ENCODE measurements at regions of chr3 and their contacts with region 1.

Region 1: GRCh38 chr3:62622553-62623193 is 249.3 kb upstream of the FEZF2 start:
- DNase-seq: peak; percentile 48
- ATAC-seq: peak; percentile 30; the same call in 2 of the 3 replicates
- H3K4me3 ChIP-seq: no peak overlapping the region
- H3K27ac ChIP-seq: no peak overlapping the region
- H3K4me1 ChIP-seq: no peaks in the 10 kb centered on the region
- H3K27me3 ChIP-seq: no peaks in the 10 kb centered on the region
- CTCF ChIP-seq: peak; percentile 64
- EP300 ChIP-seq: no peak
- POLR2A ChIP-seq: no peak
- RAD21 ChIP-seq: peak; percentile 22; the same call in 1 of the 2 replicates

Region 2: DNA sequence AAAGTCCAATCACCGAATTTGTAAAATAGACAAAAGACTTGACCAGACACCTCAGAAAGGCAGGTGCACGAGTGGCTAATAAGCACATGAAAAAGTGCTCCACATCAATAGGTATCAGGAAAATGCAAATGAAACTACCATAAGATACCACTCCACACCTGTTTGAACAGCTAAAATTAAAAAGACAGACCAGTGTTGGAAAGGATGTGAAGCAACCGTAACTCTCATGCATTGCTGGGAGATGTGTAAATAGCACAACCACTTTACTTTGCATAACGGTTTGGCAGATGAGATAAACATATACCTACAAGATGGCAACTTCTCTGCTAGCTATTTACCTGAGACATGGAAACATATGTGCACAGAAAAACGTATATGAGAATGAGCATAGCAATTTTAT is 195.7 kb after region 1 on chr3:
- CTCF ChIA-PET with region 1: no interaction called
- POLR2A ChIA-PET with region 1: no interaction called
- in situ Hi-C with region 1: no loop called
- intact Hi-C with region 1: no loop called
- DNase-seq: no peak
- ATAC-seq: no peak
- H3K4me3 ChIP-seq: no peak overlapping the region
- H3K27ac ChIP-seq: no peak overlapping the region
- H3K4me1 ChIP-seq: no peaks in the 10 kb centered on the region
- H3K27me3 ChIP-seq: no peaks in the 10 kb centered on the region; a peak in 1 of 5 replicates
- CTCF ChIP-seq: no peak
- EP300 ChIP-seq: no peak
- POLR2A ChIP-seq: no peak
- RAD21 ChIP-seq: no peak

Region 3: GRCh38 chr3:62863653-62864052 is 241.0 kb after region 1 on chr3:
- CTCF ChIA-PET with region 1: no interaction called
- POLR2A ChIA-PET with region 1: no interaction called
- in situ Hi-C with region 1: no loop called
- intact Hi-C with region 1: no loop called
- DNase-seq: no peak
- ATAC-seq: no peak
- H3K4me3 ChIP-seq: no peak overlapping the region
- H3K27ac ChIP-seq: no peak overlapping the region
- H3K4me1 ChIP-seq: no peaks in the 10 kb centered on the region
- H3K27me3 ChIP-seq: no peaks in the 10 kb centered on the region
- CTCF ChIP-seq: no peak
- EP300 ChIP-seq: no peak
- POLR2A ChIP-seq: no peak
- RAD21 ChIP-seq: no peak

Region 4: GRCh38 chr3:63015601-63016309 is 393.1 kb after region 1 on chr3:
- CTCF ChIA-PET with region 1: no interaction called
- POLR2A ChIA-PET with region 1: no interaction called
- in situ Hi-C with region 1: no loop called
- intact Hi-C with region 1: no loop called
- DNase-seq: peak; percentile 3
- ATAC-seq: peak; percentile 83
- H3K4me3 ChIP-seq: no peak overlapping the region
- H3K27ac ChIP-seq: no peak overlapping the region
- H3K4me1 ChIP-seq: no peaks in the 10 kb centered on the region
- H3K27me3 ChIP-seq: no peaks in the 10 kb centered on the region
- CTCF ChIP-seq: no peak
- EP300 ChIP-seq: no peak
- POLR2A ChIP-seq: no peak
- RAD21 ChIP-seq: no peak

Region 5: DNA sequence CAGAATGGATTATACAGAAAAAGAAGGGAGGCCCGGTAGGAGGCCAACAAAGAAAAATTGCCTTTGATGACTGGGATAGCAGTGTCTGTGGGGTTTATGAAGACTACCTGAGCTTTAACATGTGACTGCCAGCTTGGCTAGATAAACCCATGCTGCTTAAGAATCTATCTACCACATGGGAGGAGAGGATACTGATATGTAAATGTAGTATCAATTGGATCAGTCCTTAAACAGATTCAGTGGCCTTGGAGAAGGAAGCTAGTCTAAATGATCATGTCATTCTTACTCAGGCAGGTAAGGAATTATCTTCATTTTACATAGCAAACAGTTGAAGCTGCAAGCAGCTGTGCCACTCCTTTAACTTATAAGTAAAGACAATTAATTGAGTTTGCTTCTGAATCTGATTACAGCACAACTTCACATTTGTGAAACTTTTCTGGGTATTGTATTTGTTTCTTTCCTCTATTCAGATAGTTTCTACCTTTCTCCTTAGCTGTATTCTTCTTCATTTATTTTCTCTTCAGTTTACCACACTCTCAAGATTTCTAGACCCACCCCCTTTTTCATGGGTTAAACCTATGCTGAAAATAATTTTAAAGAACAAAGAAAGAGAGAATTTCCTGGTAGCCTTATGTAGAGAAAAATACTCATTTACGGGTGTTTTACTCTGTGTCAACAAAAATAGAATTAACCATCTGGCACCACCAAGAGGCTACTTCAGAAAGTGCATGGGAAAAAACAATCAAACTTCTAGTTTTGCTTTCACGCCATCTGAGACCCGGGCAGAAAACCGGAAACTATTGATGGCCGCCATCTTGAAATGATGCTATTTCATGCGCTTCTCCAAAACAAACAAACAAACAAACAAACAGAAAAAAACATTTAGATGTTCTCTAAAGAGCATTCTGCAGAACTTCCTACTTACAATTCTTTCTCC is 605.7 kb after region 1 on chr3:
- CTCF ChIA-PET with region 1: interaction called, 9 read pairs
- POLR2A ChIA-PET with region 1: no interaction called
- in situ Hi-C with region 1: no loop called
- intact Hi-C with region 1: loop called (anchors 1 kb)
- DNase-seq: peak; percentile 16
- ATAC-seq: peak; percentile 66
- H3K4me3 ChIP-seq: no peak overlapping the region
- H3K27ac ChIP-seq: no peak overlapping the region
- H3K4me1 ChIP-seq: no peaks in the 10 kb centered on the region
- H3K27me3 ChIP-seq: no peaks in the 10 kb centered on the region; a peak in 1 of 5 replicates
- CTCF ChIP-seq: peak; percentile 56
- EP300 ChIP-seq: no peak
- POLR2A ChIP-seq: no peak
- RAD21 ChIP-seq: no peak

Region 6: DNA sequence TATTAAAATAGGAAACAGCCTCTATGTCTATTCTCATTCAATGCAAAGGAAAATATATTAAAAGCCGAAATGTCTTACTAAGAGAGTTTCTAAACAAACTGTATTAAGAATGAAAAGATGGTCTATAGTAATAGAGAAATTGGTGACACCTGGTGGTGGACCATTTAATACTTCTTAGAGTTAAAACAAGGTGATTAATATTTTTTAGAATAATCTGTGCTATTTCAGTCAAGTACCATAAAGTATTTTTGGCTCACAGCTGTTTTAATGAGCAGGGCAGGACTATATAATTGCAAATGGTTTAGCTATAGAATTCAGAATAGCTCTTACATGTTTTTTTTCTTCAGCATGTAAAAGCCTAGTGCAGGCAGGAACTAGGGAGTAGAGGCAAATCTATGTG is 711.2 kb after region 1 on chr3:
- CTCF ChIA-PET with region 1: no interaction called
- POLR2A ChIA-PET with region 1: no interaction called
- in situ Hi-C with region 1: loop called (anchors 10 kb)
- intact Hi-C with region 1: no loop called
- DNase-seq: no peak
- ATAC-seq: no peak
- H3K4me3 ChIP-seq: no peak overlapping the region
- H3K27ac ChIP-seq: no peak overlapping the region
- H3K4me1 ChIP-seq: no peaks in the 10 kb centered on the region
- H3K27me3 ChIP-seq: no peaks in the 10 kb centered on the region; a peak in 2 of 5 replicates
- CTCF ChIP-seq: no peak
- EP300 ChIP-seq: no peak
- POLR2A ChIP-seq: no peak
- RAD21 ChIP-seq: no peak

Region 7: GRCh38 chr3:63383040-63383439 is 760.4 kb after region 1 on chr3:
- CTCF ChIA-PET with region 1: no interaction called
- POLR2A ChIA-PET with region 1: no interaction called
- in situ Hi-C with region 1: no loop called
- intact Hi-C with region 1: no loop called
- DNase-seq: no peak
- ATAC-seq: no peak
- H3K4me3 ChIP-seq: no peak overlapping the region
- H3K27ac ChIP-seq: no peak overlapping the region
- H3K4me1 ChIP-seq: no peaks in the 10 kb centered on the region
- H3K27me3 ChIP-seq: no peaks in the 10 kb centered on the region; a peak in 1 of 5 replicates
- CTCF ChIP-seq: no peak
- EP300 ChIP-seq: no peak
- POLR2A ChIP-seq: no peak
- RAD21 ChIP-seq: no peak

Measured in HepG2 (cell line).